Heart right ventricle (tissue), 16 donors: ENCODE measurements at regions of chr1 and their contacts with region 1.

Region 1: GRCh38 chr1:5660141-5660935 is 331.9 kb downstream of the NPHP4 start:
- DNase-seq: peak in 1 of 2 donors; percentile 41
- ATAC-seq: peak; percentile 66 to 94 (median 88)
- H3K4me3 ChIP-seq: no peak overlapping the region
- H3K27ac ChIP-seq: peak overlapping the region in 4 of 10 donors; percentile 23 to 59 (median 50)
- H3K4me1 ChIP-seq: peaks cover 0 to 15% (median 5%) of the 10 kb centered on the region in 9 donors
- H3K27me3 ChIP-seq: peaks cover 0 to 20% (median 0%) of the 10 kb centered on the region in 7 donors
- CTCF ChIP-seq: no peak

Region 2: DNA sequence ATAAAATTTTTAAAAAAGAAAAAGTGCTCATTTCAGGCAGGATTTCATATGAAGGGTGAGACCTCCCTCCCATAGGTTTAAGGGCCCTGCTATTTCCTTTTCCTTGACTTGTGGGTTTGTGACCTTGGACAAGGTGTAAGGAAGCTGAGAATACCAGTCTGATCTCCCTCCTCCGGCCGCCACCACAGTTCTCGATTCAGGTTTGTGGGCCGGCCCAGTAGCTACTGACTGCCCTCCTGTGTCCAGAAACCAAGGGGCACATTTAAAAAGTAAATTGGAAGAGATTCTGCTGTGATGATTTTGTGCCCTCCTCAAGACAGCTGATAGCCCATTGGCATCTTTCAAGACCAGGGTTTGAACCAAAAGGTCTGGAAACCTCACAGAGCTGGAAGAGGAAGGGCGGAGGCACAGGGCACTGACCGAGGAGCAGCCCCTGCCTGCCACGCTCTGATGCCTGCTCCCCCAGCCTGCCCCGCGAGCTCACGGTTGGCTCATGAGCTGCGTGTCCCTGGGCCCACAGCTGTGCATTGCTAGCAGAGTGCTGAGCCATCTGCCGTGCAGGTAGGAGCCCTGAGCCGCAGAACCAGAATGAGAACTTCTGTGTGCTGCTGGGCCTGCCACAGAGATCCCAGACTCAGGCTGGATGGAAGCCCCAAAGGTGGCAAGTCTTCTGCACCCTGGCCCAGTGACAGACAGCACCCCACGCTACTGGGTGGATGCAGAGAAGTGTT is 16.8 kb before region 1 on chr1:
- intact Hi-C with region 1: loop called in 1 of 10 experiments (anchors 2 kb)
- DNase-seq: no peak
- ATAC-seq: no peak
- H3K4me3 ChIP-seq: no peak overlapping the region
- H3K27ac ChIP-seq: no peak overlapping the region
- H3K4me1 ChIP-seq: no peaks in the 10 kb centered on the region
- H3K27me3 ChIP-seq: peaks cover 0 to 48% (median 22%) of the 10 kb centered on the region in 7 donors
- CTCF ChIP-seq: no peak

Region 3: DNA sequence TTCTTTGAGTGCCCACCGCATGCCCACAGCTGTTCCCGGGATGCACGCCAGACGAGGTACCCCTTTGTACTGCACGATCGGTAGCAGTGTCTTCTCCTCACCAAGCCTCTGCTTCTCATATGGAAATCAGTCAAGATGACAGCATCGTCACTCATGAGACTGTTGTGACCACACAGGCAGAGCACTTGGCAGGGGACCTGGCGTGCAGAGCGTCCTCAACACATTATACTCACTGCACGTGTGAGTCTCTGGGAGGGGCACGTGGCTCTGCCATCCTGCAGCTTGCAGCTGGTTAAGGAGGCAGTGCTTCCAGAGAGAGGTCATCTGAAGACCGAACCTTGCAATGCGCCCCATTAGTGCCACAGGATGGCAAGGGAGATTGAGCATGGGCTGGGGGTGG is 65.1 kb after region 1 on chr1:
- intact Hi-C with region 1: loop called in 1 of 10 experiments (anchors 2 kb)
- DNase-seq: no peak
- ATAC-seq: peak in 2 of 8 donors; percentile 17 to 18
- H3K4me3 ChIP-seq: no peak overlapping the region
- H3K27ac ChIP-seq: no peak overlapping the region
- H3K4me1 ChIP-seq: peaks cover 0 to 4% (median 0%) of the 10 kb centered on the region in 9 donors
- H3K27me3 ChIP-seq: peaks cover 0 to 52% (median 5%) of the 10 kb centered on the region in 7 donors
- CTCF ChIP-seq: no peak

Region 4: DNA sequence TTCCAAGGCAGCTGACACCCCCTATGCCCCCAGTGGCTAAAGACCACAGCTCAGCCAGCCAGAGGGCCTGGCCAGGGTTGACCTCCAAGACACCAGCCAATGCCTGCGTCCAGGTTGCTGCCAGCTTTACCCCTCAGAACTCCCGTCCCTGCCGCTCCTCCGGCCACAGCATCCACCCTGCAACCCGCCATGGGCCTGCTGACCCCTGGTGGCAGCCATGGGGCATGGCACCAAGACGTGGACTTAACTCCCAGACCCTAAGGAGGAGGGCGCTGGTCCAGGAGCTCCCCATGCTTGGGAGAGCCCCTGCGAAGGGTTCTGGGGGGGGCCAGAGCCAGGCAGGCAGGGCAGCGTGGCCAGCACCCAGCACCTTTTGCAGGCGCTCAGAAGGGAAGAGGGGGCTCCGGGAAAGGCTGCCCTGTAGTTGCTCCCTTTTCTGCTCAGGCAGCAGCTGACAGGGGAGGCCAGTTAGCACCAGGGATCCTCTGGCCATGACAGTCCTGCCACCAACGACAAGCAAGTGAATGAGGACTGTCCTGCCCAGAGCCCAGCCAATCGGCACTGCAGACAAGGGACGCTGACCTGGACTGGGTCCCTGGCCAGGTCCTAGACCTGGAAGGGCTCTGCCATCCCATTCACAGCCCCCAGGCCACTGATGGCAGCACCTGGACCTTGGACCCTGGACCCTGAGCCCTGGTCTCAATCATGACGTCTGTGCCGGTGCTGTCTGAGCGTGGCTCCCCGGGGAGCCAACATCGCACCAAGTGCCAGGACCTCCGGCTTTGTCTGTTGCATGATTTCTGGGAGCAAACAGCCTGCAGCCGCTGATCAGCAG is 85.7 kb after region 1 on chr1:
- intact Hi-C with region 1: no loop called
- DNase-seq: peak; percentile 44 to 66
- ATAC-seq: peak; percentile 56 to 91 (median 79)
- H3K4me3 ChIP-seq: no peak overlapping the region
- H3K27ac ChIP-seq: no peak overlapping the region
- H3K4me1 ChIP-seq: peaks cover 0 to 5% (median 0%) of the 10 kb centered on the region in 9 donors
- H3K27me3 ChIP-seq: peaks cover 0 to 83% (median 32%) of the 10 kb centered on the region in 7 donors
- CTCF ChIP-seq: peak; percentile 82 to 96 (median 90)